ENCODE measurements at regions of chrX and their contacts with region 1.

Region 1: GRCh38 chrX:46408553-46409407 is 136.4 kb downstream of the ZNF674 start:
- DNase-seq: peak; percentile 68
- H3K4me3 ChIP-seq: no peak overlapping the region
- H3K27ac ChIP-seq: no peak overlapping the region
- H3K4me1 ChIP-seq: peaks cover 9% of the 10 kb centered on the region; the same call in 1 of the 2 replicates
- H3K27me3 ChIP-seq: no peaks in the 10 kb centered on the region

Region 2: DNA sequence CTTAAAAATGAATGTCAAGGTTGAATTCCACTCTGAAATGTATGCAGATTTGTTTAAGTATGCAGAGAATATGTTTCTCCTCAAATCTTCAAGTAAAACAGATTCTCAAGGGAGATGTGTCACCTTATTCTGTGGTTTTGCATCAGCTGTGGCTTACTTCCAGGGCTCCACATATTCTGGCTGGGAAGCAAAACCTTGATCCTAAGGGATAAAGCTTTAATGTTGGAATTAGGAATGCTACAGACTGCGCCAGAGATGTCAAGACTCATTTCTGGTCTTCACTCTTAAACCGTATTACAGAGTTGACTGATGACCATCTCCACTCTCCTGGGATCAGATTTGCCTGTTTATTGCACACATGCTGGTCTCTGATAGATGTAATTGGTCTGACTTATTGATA is 1064.2 kb before region 1 on chrX:
- in situ Hi-C with region 1: loop called (anchors 25 kb)
- DNase-seq: peak; percentile 78
- H3K4me3 ChIP-seq: no peak overlapping the region
- H3K27ac ChIP-seq: peak overlapping the region; percentile 54
- H3K4me1 ChIP-seq: peaks cover 38% of the 10 kb centered on the region
- H3K27me3 ChIP-seq: no peaks in the 10 kb centered on the region

Region 3: DNA sequence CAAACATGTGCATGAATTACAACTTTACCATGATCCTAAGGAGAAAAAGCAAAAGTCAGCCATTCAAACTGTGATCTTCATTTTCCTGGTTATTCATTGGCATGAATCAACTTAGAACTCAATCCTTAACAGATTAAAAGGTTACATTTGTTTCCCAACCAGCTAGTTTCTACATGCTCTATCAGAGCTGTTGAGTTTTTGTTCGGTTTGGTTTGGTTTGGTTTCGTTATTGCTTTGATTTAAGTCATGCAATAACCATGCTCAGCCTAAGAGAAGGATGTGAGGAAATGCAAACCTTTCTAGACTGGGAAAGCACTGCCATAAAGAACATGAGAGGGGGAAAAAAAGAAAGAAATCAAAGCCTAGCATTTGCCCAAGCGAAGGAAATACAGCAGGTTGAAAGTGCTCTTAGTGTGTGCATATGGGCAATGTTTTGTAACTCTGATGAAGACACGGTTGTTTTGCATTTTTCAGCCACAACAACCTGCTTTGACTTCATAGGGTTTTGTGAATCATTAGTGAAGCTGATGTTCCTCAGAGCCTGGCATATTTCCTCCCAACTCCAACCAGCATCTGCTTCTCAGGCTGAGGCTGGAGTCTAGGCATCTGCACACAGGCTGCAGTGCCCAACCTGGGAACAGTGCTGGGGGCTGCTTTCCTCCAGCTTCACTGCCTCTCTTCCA is 97.8 kb before region 1 on chrX:
- in situ Hi-C with region 1: no loop called
- DNase-seq: peak; percentile 33
- H3K4me3 ChIP-seq: no peak overlapping the region
- H3K27ac ChIP-seq: no peak overlapping the region
- H3K4me1 ChIP-seq: 0 out of 2 replicates have a peak, but pooled peaks cover 15% of the 10 kb centered on the region
- H3K27me3 ChIP-seq: no peaks in the 10 kb centered on the region

Region 4: GRCh38 chrX:46341767-46342322 is 66.9 kb before region 1 on chrX:
- in situ Hi-C with region 1: no loop called
- DNase-seq: no peak
- H3K4me3 ChIP-seq: no peak overlapping the region
- H3K27ac ChIP-seq: no peak overlapping the region
- H3K4me1 ChIP-seq: no peaks in the 10 kb centered on the region
- H3K27me3 ChIP-seq: no peaks in the 10 kb centered on the region

Region 5: GRCh38 chrX:46573331-46573891 is 164.6 kb after region 1 on chrX and contains the start of gene CHST7:
- in situ Hi-C with region 1: no loop called
- DNase-seq: peak; percentile 81
- H3K4me3 ChIP-seq: peak within 1 kb of the TSS; percentile 79
- H3K27ac ChIP-seq: peak within 1 kb of the TSS; percentile 66
- H3K4me1 ChIP-seq: peaks cover 7% of the 10 kb centered on the region
- H3K27me3 ChIP-seq: no peaks in the 10 kb centered on the region
- total RNA-seq, gene CHST7: 17.5 and 27.8 TPM in 2 replicates

Measured in GM23248 (cell line).